B cell (primary cell): ENCODE measurements at regions of chr4 and their contacts with region 1.

Region 1: GRCh38 chr4:39961311-39961877 is 16.3 kb downstream of the PDS5A start:
- DNase-seq: no peak
- ATAC-seq: no peak
- H3K4me3 ChIP-seq: no peak overlapping the region
- H3K4me3 Mint-ChIP-seq: no peak overlapping the region
- H3K27ac ChIP-seq: no peak overlapping the region
- H3K27ac Mint-ChIP-seq: peak overlapping the region; percentile 72
- H3K4me1 ChIP-seq: peaks cover 20 to 29% of the 10 kb centered on the region in 2 donors
- H3K4me1 Mint-ChIP-seq: peaks cover 52% of the 10 kb centered on the region
- H3K27me3 ChIP-seq: no peaks in the 10 kb centered on the region
- H3K27me3 Mint-ChIP-seq: no peaks in the 10 kb centered on the region
- CTCF ChIP-seq: no peak

Region 2: DNA sequence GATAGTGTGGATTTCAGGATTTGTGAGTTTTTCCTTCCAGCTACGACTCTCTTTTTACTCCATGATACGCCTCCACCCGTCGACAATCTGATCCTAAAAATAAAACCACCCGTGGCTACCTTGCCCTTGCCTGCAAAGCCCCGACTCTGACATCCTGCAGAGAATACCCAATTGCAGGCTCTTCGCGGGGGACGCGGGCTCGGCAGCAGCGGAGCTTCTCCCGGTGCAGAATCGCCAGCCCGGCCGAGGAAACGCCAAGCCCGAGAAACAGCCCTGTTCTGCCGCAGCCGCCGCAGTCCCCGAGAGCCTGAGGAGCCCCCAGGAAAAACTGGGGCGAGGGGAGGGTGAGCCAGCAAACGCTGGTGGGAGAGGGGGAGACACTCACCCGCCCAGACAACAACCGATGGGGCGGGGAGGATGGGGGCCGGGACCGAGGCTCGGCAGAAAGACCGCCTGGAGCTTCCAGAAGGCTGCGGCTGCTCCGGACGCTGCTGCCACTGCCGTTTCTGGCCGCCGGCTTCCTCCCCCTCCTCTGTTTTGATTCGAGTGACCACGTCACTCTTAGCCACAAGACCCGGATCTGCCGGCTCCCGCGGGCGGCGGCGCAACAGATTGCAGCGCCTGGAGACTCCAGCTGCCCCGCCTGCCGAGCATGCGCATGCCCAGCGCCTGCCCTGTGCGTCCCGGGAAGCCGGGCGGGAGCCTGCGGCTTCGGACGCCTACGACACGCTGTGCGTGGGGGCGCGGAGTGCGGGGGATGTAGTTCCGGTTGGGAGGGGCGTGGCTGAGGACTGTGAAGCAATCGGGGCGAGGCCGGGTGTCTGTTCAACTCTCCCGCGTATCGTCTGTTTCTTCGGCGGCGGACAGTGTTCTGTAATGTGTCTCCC is 322.8 kb before region 1 on chr4 and contains the start of gene SMIM14:
- CTCF ChIA-PET with region 1: no interaction called
- POLR2A ChIA-PET with region 1: no interaction called
- intact Hi-C with region 1: no loop called
- DNase-seq: peak; percentile 93
- ATAC-seq: peak; percentile 80
- H3K4me3 ChIP-seq: peak within 1 kb of the TSS; percentile 79 to 98 (median 93)
- H3K4me3 Mint-ChIP-seq: peak within 1 kb of the TSS; percentile 91
- H3K27ac ChIP-seq: peak within 1 kb of the TSS; percentile 87 to 92
- H3K27ac Mint-ChIP-seq: peak within 1 kb of the TSS; percentile 91
- H3K4me1 ChIP-seq: peaks cover 39% of the 10 kb centered on the region in 2 donors
- H3K4me1 Mint-ChIP-seq: peaks cover 56% of the 10 kb centered on the region
- H3K27me3 ChIP-seq: no peaks in the 10 kb centered on the region
- H3K27me3 Mint-ChIP-seq: no peaks in the 10 kb centered on the region
- CTCF ChIP-seq: no peak
- total RNA-seq, gene SMIM14: 43.5 and 56.0 TPM in 2 replicates

Region 3: DNA sequence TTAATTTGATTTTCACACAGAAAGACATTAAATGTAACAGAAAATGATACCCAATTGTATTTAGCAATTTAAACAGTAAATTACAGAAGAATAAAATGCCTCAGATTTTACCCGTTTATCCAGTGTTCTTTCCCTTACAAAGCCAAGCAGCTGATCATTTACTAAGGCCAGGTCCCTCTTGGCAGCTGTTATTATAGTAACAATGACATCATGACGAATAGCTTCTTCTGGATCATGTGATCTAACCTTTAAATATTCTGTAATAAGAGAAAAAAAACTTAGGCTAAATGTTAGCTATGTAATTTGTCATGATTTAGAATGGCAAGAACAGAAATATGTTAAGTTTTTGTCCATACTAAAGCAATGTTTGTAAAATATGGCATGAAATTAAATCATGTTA is 53.1 kb before region 1 on chr4:
- CTCF ChIA-PET with region 1: no interaction called
- POLR2A ChIA-PET with region 1: no interaction called
- intact Hi-C with region 1: loop called (anchors 5 kb)
- DNase-seq: no peak
- ATAC-seq: no peak
- H3K4me3 ChIP-seq: no peak overlapping the region
- H3K4me3 Mint-ChIP-seq: no peak overlapping the region
- H3K27ac ChIP-seq: no peak overlapping the region
- H3K27ac Mint-ChIP-seq: no peak overlapping the region
- H3K4me1 ChIP-seq: no peaks in the 10 kb centered on the region
- H3K4me1 Mint-ChIP-seq: no peaks in the 10 kb centered on the region
- H3K27me3 ChIP-seq: no peaks in the 10 kb centered on the region
- H3K27me3 Mint-ChIP-seq: no peaks in the 10 kb centered on the region
- CTCF ChIP-seq: no peak

Region 4: GRCh38 chr4:39928538-39928937 is 32.9 kb before region 1 on chr4:
- CTCF ChIA-PET with region 1: no interaction called
- POLR2A ChIA-PET with region 1: no interaction called
- intact Hi-C with region 1: loop called (anchors 5 kb)
- DNase-seq: no peak
- ATAC-seq: no peak
- H3K4me3 ChIP-seq: no peak overlapping the region
- H3K4me3 Mint-ChIP-seq: no peak overlapping the region
- H3K27ac ChIP-seq: no peak overlapping the region
- H3K27ac Mint-ChIP-seq: peak overlapping the region; percentile 59
- H3K4me1 ChIP-seq: peaks cover 16 to 23% of the 10 kb centered on the region in 2 donors
- H3K4me1 Mint-ChIP-seq: peaks cover 23% of the 10 kb centered on the region
- H3K27me3 ChIP-seq: no peaks in the 10 kb centered on the region
- H3K27me3 Mint-ChIP-seq: no peaks in the 10 kb centered on the region
- CTCF ChIP-seq: no peak

Region 5: DNA sequence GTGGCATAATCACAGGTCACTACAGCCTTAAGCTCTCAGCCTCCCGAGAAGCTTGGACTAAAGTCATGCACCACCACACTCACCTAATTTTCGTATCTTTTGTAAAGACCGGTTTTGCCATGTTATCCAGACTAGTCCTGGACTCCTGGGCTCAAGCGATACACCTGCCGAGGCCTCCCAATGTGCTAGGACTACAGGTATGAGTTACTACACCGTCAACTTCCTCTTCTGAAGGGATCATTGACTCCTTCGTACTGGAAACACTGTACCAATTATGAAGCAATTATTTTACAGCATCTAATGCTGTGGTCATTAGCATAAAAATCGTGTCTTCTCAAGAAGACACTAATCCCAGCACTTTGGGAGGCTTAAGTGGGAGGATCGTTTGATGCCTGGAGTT is 18.9 kb before region 1 on chr4:
- CTCF ChIA-PET with region 1: interaction called, 3 read pairs
- POLR2A ChIA-PET with region 1: no interaction called
- intact Hi-C with region 1: loop called (anchors 2 kb)
- DNase-seq: peak; percentile 47
- ATAC-seq: no peak
- H3K4me3 ChIP-seq: peak overlapping the region in 2 of 5 experiments; percentile 4 to 28
- H3K4me3 Mint-ChIP-seq: peak overlapping the region; percentile 40
- H3K27ac ChIP-seq: peak overlapping the region; percentile 23 to 55
- H3K27ac Mint-ChIP-seq: peak overlapping the region; percentile 23
- H3K4me1 ChIP-seq: peaks cover 47 to 59% of the 10 kb centered on the region in 2 donors
- H3K4me1 Mint-ChIP-seq: peaks cover 72% of the 10 kb centered on the region
- H3K27me3 ChIP-seq: no peaks in the 10 kb centered on the region
- H3K27me3 Mint-ChIP-seq: no peaks in the 10 kb centered on the region
- CTCF ChIP-seq: no peak

Region 6: GRCh38 chr4:40152637-40153036 is 191.2 kb after region 1 on chr4:
- CTCF ChIA-PET with region 1: no interaction called
- POLR2A ChIA-PET with region 1: no interaction called
- intact Hi-C with region 1: no loop called
- DNase-seq: peak; percentile 44
- ATAC-seq: no peak
- H3K4me3 ChIP-seq: peak overlapping the region in 1 of 5 experiments; percentile 17
- H3K4me3 Mint-ChIP-seq: peak overlapping the region; percentile 62
- H3K27ac ChIP-seq: peak overlapping the region; percentile 11 to 76
- H3K27ac Mint-ChIP-seq: peak overlapping the region; percentile 83
- H3K4me1 ChIP-seq: peaks cover 22 to 32% of the 10 kb centered on the region in 2 donors
- H3K4me1 Mint-ChIP-seq: peaks cover 38% of the 10 kb centered on the region
- H3K27me3 ChIP-seq: no peaks in the 10 kb centered on the region
- H3K27me3 Mint-ChIP-seq: no peaks in the 10 kb centered on the region
- CTCF ChIP-seq: no peak